Activated CD8-positive, alpha-beta T cell treated with anti-CD3 and anti-CD28 coated beads for 36 hours (primary cell): ENCODE measurements at regions of chr10 and their contacts with region 1.

Region 1: DNA sequence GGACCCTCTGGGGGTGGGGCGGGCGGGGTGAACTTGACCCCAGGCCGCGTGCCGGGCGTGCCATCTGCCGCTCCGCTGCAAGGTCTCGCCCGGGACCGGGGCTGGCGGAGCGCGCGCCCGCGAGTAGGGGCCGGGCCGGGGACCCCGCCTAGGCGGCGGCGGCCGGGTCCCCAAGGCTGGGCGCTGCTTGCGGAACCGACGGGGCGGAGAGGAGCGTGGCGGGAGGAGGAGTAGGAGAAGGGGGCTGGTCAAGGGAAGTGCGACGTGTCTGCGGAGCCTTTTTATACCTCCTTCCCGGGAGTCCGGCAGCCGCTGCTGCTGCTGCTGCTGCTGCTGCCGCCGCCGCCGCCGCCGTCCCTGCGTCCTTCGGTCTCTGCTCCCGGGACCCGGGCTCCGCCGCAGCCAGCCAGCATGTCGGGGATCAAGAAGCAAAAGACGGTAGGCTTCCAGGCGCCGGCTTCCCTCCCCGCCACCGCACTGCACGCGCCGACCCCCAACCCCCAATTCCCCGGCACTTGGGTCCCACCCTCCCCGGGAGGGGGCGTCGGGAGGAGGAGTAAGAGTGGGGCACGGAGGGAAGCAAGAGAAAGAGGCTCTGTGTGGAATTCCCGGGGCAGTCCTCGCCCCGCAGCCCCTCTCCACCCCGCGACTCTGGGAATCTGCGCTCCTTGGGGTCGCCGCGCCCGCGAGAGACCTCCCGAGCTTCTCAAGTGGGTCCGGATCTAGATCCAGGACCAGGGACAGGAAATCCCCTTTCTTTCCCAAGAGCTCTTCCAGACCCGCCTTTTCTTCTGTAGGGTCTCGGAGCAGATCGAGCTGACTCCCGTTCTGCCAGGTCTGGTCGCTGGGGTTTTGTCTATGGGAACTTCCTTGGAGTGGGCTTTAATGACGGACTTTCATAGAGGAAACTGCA is at the start of gene PAPSS2:
- DNase-seq: peak; percentile 25
- ATAC-seq: peak; percentile 47
- H3K4me3 Mint-ChIP-seq: peak within 1 kb of the TSS; percentile 64
- H3K27ac Mint-ChIP-seq: no peak within 1 kb of the TSS
- H3K4me1 Mint-ChIP-seq: peaks cover 6% of the 10 kb centered on the region
- H3K27me3 Mint-ChIP-seq: peaks cover 45% of the 10 kb centered on the region
- CTCF ChIP-seq: no peak
- total RNA-seq, gene PAPSS2: 0.14 to 0.20 TPM

Region 2: GRCh38 chr10:87531908-87532622 is 127.8 kb before region 1 on chr10:
- CTCF ChIA-PET with region 1: no interaction called
- POLR2A ChIA-PET with region 1: no interaction called
- intact Hi-C with region 1: loop called (anchors 5 kb)
- DNase-seq: no peak
- ATAC-seq: no peak
- H3K4me3 Mint-ChIP-seq: no peak overlapping the region
- H3K27ac Mint-ChIP-seq: no peak overlapping the region
- H3K4me1 Mint-ChIP-seq: peaks cover 8% of the 10 kb centered on the region
- H3K27me3 Mint-ChIP-seq: no peaks in the 10 kb centered on the region
- CTCF ChIP-seq: no peak

Region 3: GRCh38 chr10:87622314-87623004 is 37.4 kb before region 1 on chr10:
- CTCF ChIA-PET with region 1: no interaction called
- POLR2A ChIA-PET with region 1: no interaction called
- intact Hi-C with region 1: no loop called
- DNase-seq: no peak
- ATAC-seq: peak; percentile 39
- H3K4me3 Mint-ChIP-seq: no peak overlapping the region
- H3K27ac Mint-ChIP-seq: no peak overlapping the region
- H3K4me1 Mint-ChIP-seq: no peaks in the 10 kb centered on the region
- H3K27me3 Mint-ChIP-seq: peaks cover 8% of the 10 kb centered on the region
- CTCF ChIP-seq: no peak

Region 4: GRCh38 chr10:87782721-87783120 is 122.9 kb after region 1 on chr10:
- CTCF ChIA-PET with region 1: no interaction called
- POLR2A ChIA-PET with region 1: no interaction called
- intact Hi-C with region 1: no loop called
- DNase-seq: no peak
- ATAC-seq: no peak
- H3K4me3 Mint-ChIP-seq: no peak overlapping the region
- H3K27ac Mint-ChIP-seq: no peak overlapping the region
- H3K4me1 Mint-ChIP-seq: peaks cover 4% of the 10 kb centered on the region
- H3K27me3 Mint-ChIP-seq: no peaks in the 10 kb centered on the region
- CTCF ChIP-seq: no peak